ENCODE measurements at regions of chr11 and their contacts with region 1.

Region 1: DNA sequence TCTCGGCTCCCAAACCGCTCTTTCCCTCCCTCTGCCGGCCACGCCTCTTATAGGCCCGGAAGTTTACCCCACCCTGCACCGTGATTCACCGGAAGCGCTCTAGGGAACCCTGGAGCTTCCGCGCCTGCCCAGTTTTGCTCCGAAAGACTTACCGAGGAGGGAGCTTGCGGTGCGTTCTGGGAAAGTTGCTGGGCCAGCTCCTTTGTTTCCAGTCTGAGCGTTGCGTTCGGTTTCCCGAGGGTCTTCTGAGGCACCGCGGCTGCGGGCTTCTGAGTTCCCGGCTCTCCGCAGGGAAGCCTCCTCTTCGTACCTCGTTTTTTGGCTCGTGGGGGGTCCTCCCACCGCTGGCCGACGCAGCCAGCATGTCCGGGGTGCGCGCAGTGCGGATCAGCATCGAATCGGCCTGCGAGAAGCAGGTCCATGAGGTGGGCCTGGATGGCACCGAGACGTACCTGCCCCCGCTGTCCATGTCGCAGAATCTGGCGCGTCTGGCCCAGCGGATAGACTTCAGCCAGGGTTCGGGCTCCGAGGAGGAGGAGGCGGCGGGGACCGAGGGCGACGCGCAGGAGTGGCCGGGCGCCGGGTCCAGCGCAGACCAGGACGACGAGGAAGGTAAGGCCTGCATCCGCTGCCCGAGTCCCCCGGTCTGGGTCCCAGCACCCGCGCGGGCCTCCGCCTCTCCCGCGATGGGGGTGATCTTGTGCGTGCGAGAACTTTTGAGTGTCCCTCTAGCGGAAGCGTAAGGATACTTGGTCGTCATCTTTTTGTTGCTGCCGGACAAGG is at the start of gene MED17:
- DNase-seq: peak; percentile 64 to 87 (median 85)
- ATAC-seq: peak; percentile 97
- H3K4me3 ChIP-seq: peak within 1 kb of the TSS; percentile 77
- H3K4me3 Mint-ChIP-seq: peak within 1 kb of the TSS; percentile 93 to 100 (median 96)
- H3K27ac ChIP-seq: peak within 1 kb of the TSS; percentile 94
- H3K27ac Mint-ChIP-seq: peak within 1 kb of the TSS; percentile 81 to 97 (median 93)
- H3K4me1 ChIP-seq: peaks cover 22 to 37% of the 10 kb centered on the region in 2 donors
- H3K4me1 Mint-ChIP-seq: peaks cover 34 to 58% (median 48%) of the 10 kb centered on the region in 7 donors
- H3K27me3 ChIP-seq: no peaks in the 10 kb centered on the region
- H3K27me3 Mint-ChIP-seq: no peaks in the 10 kb centered on the region
- total RNA-seq, gene MED17: 47.7 to 75.9 (median 65.6) TPM

Region 2: DNA sequence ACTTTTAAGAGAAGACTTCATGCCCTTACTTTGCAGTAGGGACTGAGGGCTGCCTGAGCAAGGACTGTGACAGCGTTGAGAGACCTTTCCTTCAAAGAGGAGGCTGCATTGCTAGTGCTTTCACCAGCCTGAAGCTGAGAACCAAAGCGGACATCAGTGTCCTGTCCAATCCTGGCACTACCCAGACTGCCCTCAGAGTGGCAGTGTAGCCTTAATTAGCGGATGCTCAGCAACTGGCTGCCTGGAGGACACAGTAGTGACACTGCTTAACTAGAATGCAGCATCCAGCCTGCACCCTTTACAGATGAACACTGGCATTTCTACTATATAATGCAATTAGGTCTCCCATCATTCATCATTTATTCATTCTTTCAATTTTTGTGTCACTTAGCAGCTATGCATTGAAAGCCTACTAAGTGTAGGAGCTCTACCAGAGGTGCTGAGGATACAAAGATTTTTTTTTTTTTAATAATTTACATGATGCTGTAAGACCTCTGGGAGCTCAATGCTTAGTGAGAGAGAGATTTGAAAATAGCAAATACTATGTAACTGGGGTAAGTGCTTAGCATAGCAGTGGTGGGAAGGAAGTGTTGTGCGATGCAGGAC is 549.6 kb before region 1 on chr11:
- CTCF ChIA-PET with region 1: no interaction called
- POLR2A ChIA-PET with region 1: no interaction called
- intact Hi-C with region 1: loop called in 1 of 2 experiments (anchors 10 kb)
- DNase-seq: peak; percentile 16 to 62 (median 50)
- ATAC-seq: peak; percentile 97
- H3K4me3 ChIP-seq: no peak overlapping the region
- H3K4me3 Mint-ChIP-seq: no peak overlapping the region
- H3K27ac ChIP-seq: no peak overlapping the region
- H3K27ac Mint-ChIP-seq: no peak overlapping the region
- H3K4me1 ChIP-seq: no peaks in the 10 kb centered on the region
- H3K4me1 Mint-ChIP-seq: no peaks in the 10 kb centered on the region
- H3K27me3 ChIP-seq: no peaks in the 10 kb centered on the region
- H3K27me3 Mint-ChIP-seq: peaks cover 27 to 46% (median 40%) of the 10 kb centered on the region in 5 donors

Region 3: DNA sequence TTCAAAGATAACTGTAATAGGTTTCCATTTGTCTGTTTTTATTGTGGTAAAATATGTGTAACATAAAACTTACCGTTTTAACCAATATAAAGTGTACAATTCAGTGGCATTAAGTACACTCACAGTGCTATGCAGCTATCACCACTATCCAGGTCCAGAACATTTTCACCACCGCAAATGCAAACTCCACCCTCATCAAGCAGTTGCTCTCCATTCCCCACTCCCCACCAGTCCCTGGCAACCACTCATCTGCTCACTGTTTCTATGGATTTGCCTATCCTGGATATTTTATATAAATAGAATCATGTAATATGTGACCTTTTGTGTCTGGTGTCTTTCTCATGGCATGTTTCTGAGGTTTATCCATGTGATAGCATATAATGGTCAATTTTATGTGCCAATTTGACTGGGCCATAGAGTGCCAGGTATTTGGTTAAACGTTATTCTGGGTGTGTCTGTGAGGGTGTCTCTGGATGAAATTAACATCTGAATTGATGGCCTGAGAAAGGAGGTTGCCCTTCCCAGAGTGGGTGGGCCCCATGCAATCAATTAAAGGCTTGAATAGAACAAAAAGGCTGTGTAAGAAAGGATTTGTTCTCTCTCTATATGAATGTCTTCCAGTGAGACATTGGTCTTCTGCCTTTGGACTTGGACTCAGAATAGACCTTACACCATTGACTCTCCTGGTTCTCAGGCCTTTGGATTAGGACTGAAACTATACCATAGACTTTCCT is 224.0 kb before region 1 on chr11:
- CTCF ChIA-PET with region 1: no interaction called
- POLR2A ChIA-PET with region 1: no interaction called
- intact Hi-C with region 1: no loop called
- DNase-seq: no peak
- ATAC-seq: no peak
- H3K4me3 ChIP-seq: no peak overlapping the region
- H3K4me3 Mint-ChIP-seq: no peak overlapping the region
- H3K27ac ChIP-seq: no peak overlapping the region
- H3K27ac Mint-ChIP-seq: no peak overlapping the region
- H3K4me1 ChIP-seq: no peaks in the 10 kb centered on the region
- H3K4me1 Mint-ChIP-seq: peaks cover 0 to 8% (median 0%) of the 10 kb centered on the region in 7 donors
- H3K27me3 ChIP-seq: no peaks in the 10 kb centered on the region
- H3K27me3 Mint-ChIP-seq: peaks cover 5 to 26% (median 14%) of the 10 kb centered on the region in 5 donors

Region 4: DNA sequence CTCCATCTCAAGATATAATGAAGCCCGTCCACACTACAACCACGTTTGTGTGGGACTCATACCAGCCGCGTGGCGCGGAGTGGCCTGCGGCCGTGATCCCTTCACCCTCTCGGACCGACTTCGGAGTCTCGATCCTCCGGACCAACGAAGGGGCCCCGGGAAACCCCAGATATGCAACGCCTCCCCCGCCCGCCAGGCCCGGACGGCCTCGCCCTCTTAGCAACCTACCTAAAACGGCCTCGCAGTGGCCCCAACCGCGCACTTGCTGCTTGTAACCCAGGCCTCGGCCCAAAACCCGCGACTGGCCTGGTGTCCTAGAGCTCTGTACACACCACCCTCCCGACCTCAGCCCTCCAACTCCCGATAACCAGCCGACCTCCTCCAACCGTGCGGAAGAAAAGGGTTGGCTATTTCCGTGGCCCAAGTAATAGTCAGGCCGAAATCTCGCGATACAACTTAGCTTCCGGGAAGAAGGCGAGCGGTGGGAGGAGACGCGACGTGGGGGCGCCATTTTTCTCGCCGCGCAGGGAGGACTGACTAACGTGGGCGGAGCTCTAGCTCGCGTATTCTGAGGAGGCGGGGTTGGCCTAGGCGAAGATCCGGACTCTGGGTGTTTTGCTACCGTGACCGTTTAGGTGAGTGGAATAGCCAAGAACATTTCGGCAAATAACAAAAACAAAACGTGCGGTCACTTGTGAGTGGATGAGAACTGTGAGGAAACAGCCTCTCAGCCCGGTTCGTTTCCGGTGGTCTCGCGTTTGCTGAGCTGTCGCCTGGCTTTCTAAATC is 43.1 kb before region 1 on chr11 and contains the starts of genes C11orf54 and TAF1D:
- CTCF ChIA-PET with region 1: interaction called, 8 read pairs
- POLR2A ChIA-PET with region 1: interaction called, 96 read pairs
- intact Hi-C with region 1: loop called (anchors 1 kb)
- DNase-seq: peak; percentile 85 to 98 (median 96)
- ATAC-seq: peak; percentile 96
- H3K4me3 ChIP-seq: peak within 1 kb of the TSS; percentile 88
- H3K4me3 Mint-ChIP-seq: peak within 1 kb of the TSS; percentile 95 to 100 (median 100)
- H3K27ac ChIP-seq: peak within 1 kb of the TSS; percentile 84
- H3K27ac Mint-ChIP-seq: peak within 1 kb of the TSS; percentile 98 to 100 (median 100)
- H3K4me1 ChIP-seq: peaks cover 28 to 31% of the 10 kb centered on the region in 2 donors
- H3K4me1 Mint-ChIP-seq: peaks cover 37 to 92% (median 71%) of the 10 kb centered on the region in 7 donors
- H3K27me3 ChIP-seq: no peaks in the 10 kb centered on the region
- H3K27me3 Mint-ChIP-seq: peaks cover 0 to 3% (median 0%) of the 10 kb centered on the region in 5 donors
- total RNA-seq, gene C11orf54: 16.4 to 42.5 (median 27.2) TPM
- total RNA-seq, gene TAF1D: 116 to 197 (median 183) TPM

Region 5: GRCh38 chr11:93804879-93805278 is 20.5 kb after region 1 on chr11:
- CTCF ChIA-PET with region 1: no interaction called
- POLR2A ChIA-PET with region 1: interaction called, 3 read pairs
- intact Hi-C with region 1: loop called in 1 of 2 experiments (anchors 2 kb)
- DNase-seq: no peak
- ATAC-seq: no peak
- H3K4me3 ChIP-seq: no peak overlapping the region
- H3K4me3 Mint-ChIP-seq: no peak overlapping the region
- H3K27ac ChIP-seq: no peak overlapping the region
- H3K27ac Mint-ChIP-seq: peak overlapping the region in 5 of 9 donors; percentile 3 to 48 (median 41)
- H3K4me1 ChIP-seq: no peaks in the 10 kb centered on the region
- H3K4me1 Mint-ChIP-seq: peaks cover 0 to 15% (median 0%) of the 10 kb centered on the region in 7 donors
- H3K27me3 ChIP-seq: no peaks in the 10 kb centered on the region
- H3K27me3 Mint-ChIP-seq: no peaks in the 10 kb centered on the region

Region 6: DNA sequence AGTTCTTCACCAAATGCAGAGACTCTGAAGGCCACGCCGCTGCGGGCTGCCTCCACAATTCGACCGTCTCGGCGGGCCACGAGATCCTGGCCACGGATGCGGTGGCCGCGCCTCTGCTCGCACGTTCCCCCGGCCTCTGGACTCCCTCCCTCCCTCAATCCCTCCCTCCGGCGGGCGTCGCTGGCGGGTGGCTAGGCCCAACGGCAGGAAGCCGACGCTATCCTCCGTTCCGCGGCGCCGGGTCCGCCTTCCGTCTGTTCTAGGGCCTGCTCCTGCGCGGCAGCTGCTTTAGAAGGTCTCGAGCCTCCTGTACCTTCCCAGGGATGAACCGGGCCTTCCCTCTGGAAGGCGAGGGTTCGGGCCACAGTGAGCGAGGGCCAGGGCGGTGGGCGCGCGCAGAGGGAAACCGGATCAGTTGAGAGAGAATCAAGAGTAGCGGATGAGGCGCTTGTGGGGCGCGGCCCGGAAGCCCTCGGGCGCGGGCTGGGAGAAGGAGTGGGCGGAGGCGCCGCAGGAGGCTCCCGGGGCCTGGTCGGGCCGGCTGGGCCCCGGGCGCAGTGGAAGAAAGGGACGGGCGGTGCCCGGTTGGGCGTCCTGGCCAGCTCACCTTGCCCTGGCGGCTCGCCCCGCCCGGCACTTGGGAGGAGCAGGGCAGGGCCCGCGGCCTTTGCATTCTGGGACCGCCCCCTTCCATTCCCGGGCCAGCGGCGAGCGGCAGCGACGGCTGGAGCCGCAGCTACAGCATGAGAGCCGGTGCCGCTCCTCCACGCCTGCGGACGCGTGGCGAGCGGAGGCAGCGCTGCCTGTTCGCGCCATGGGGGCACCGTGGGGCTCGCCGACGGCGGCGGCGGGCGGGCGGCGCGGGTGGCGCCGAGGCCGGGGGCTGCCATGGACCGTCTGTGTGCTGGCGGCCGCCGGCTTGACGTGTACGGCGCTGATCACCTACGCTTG is 759.6 kb after region 1 on chr11 and contains the start of gene FUT4:
- CTCF ChIA-PET with region 1: no interaction called
- POLR2A ChIA-PET with region 1: no interaction called
- intact Hi-C with region 1: loop called in 1 of 2 experiments (anchors 1 kb)
- DNase-seq: peak; percentile 51 to 83 (median 70)
- ATAC-seq: peak; percentile 84
- H3K4me3 ChIP-seq: peak within 1 kb of the TSS; percentile 85
- H3K4me3 Mint-ChIP-seq: peak within 1 kb of the TSS; percentile 93 to 100 (median 98)
- H3K27ac ChIP-seq: peak within 1 kb of the TSS; percentile 88
- H3K27ac Mint-ChIP-seq: peak within 1 kb of the TSS; percentile 96 to 100 (median 99)
- H3K4me1 ChIP-seq: peaks cover 22 to 29% of the 10 kb centered on the region in 2 donors
- H3K4me1 Mint-ChIP-seq: peaks cover 24 to 49% (median 41%) of the 10 kb centered on the region in 7 donors
- H3K27me3 ChIP-seq: no peaks in the 10 kb centered on the region
- H3K27me3 Mint-ChIP-seq: no peaks in the 10 kb centered on the region
- total RNA-seq, gene FUT4: 5.6 to 10.2 (median 6.9) TPM

Measured in naive thymus-derived CD4-positive, alpha-beta T cell (primary cell).